MCF 10A (cell line): ENCODE measurements at regions of chr1 and their contacts with region 1.

Region 1: GRCh38 chr1:228734881-228735801 is at the start of gene RHOU:
- DNase-seq: peak; percentile 55
- H3K4me3 Mint-ChIP-seq: peak within 1 kb of the TSS; percentile 72
- H3K27ac Mint-ChIP-seq: peak within 1 kb of the TSS; percentile 61
- H3K4me1 Mint-ChIP-seq: peaks cover 12% of the 10 kb centered on the region
- H3K27me3 Mint-ChIP-seq: peaks cover 9% of the 10 kb centered on the region
- CTCF ChIP-seq: peak; percentile 98
- total RNA-seq, gene RHOU: 2.1 and 3.6 TPM in 2 replicates

Region 2: DNA sequence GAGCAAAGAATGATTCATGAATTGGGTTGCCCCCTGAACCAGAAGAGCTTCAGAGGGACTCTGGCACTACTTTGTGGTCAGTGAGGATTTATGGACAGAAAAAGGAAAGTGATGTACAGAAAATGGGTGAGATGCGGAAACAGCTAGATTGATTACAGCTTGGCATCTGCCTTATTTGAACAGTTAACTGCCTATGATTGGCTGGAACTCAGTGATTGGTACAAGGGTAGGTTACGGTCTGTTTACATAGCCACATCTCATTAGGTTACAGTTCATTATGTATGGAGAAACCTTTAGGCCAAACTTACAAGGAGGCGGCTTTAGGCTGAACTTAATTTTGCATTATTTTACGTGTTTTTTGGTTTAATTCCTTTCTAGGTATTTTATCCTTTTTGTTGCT is 28.8 kb before region 1 on chr1:
- CTCF ChIA-PET with region 1: interaction called, 12 read pairs
- POLR2A ChIA-PET with region 1: interaction called, 4 read pairs
- intact Hi-C with region 1: no loop called
- DNase-seq: no peak
- H3K4me3 Mint-ChIP-seq: no peak overlapping the region
- H3K27ac Mint-ChIP-seq: no peak overlapping the region
- H3K4me1 Mint-ChIP-seq: no peaks in the 10 kb centered on the region
- H3K27me3 Mint-ChIP-seq: peaks cover 11% of the 10 kb centered on the region
- CTCF ChIP-seq: no peak

Region 3: GRCh38 chr1:228944935-228945371 is 209.8 kb after region 1 on chr1:
- CTCF ChIA-PET with region 1: interaction called, 4 read pairs
- POLR2A ChIA-PET with region 1: no interaction called
- intact Hi-C with region 1: loop called (anchors 2 kb)
- DNase-seq: no peak
- H3K4me3 Mint-ChIP-seq: no peak overlapping the region
- H3K27ac Mint-ChIP-seq: no peak overlapping the region
- H3K4me1 Mint-ChIP-seq: no peaks in the 10 kb centered on the region
- H3K27me3 Mint-ChIP-seq: peaks cover 23% of the 10 kb centered on the region
- CTCF ChIP-seq: no peak

Region 4: GRCh38 chr1:229117664-229118300 is 382.6 kb after region 1 on chr1:
- CTCF ChIA-PET with region 1: interaction called, 7 read pairs
- POLR2A ChIA-PET with region 1: interaction called, 3 read pairs
- intact Hi-C with region 1: loop called (anchors 5 kb)
- DNase-seq: peak; percentile 98
- H3K4me3 Mint-ChIP-seq: peak overlapping the region; percentile 15
- H3K27ac Mint-ChIP-seq: peak overlapping the region; percentile 55
- H3K4me1 Mint-ChIP-seq: peaks cover 26% of the 10 kb centered on the region
- H3K27me3 Mint-ChIP-seq: no peaks in the 10 kb centered on the region
- CTCF ChIP-seq: no peak

Region 5: GRCh38 chr1:229221104-229222019 is 486.2 kb after region 1 on chr1:
- CTCF ChIA-PET with region 1: interaction called, 95 read pairs
- POLR2A ChIA-PET with region 1: interaction called, 4 read pairs
- intact Hi-C with region 1: no loop called
- DNase-seq: peak; percentile 99
- H3K4me3 Mint-ChIP-seq: no peak overlapping the region
- H3K27ac Mint-ChIP-seq: no peak overlapping the region
- H3K4me1 Mint-ChIP-seq: peaks cover 20% of the 10 kb centered on the region
- H3K27me3 Mint-ChIP-seq: peaks cover 12% of the 10 kb centered on the region
- CTCF ChIP-seq: no peak